Activated B cell treated with CpG ODN at 0.5 μM for 24 hours (primary cell): ENCODE measurements at regions of chr4 and their contacts with region 1.

Region 1: GRCh38 chr4:82268050-82268825 is 105.6 kb downstream of the HNRNPD start:
- DNase-seq: no peak
- ATAC-seq: peak; percentile 89
- H3K4me3 Mint-ChIP-seq: no peak overlapping the region
- H3K27ac Mint-ChIP-seq: no peak overlapping the region
- H3K4me1 Mint-ChIP-seq: peaks cover 32% of the 10 kb centered on the region
- H3K27me3 Mint-ChIP-seq: peaks cover 3% of the 10 kb centered on the region
- CTCF ChIP-seq: peak; percentile 62

Region 2: GRCh38 chr4:81606801-81607501 is 661.3 kb before region 1 on chr4:
- CTCF ChIA-PET with region 1: no interaction called
- POLR2A ChIA-PET with region 1: no interaction called
- intact Hi-C with region 1: loop called (anchors 5 kb)
- DNase-seq: no peak
- ATAC-seq: peak; percentile 54
- H3K4me3 Mint-ChIP-seq: peak overlapping the region; percentile 55
- H3K27ac Mint-ChIP-seq: peak overlapping the region; percentile 86
- H3K4me1 Mint-ChIP-seq: peaks cover 58% of the 10 kb centered on the region
- H3K27me3 Mint-ChIP-seq: no peaks in the 10 kb centered on the region
- CTCF ChIP-seq: no peak

Region 3: DNA sequence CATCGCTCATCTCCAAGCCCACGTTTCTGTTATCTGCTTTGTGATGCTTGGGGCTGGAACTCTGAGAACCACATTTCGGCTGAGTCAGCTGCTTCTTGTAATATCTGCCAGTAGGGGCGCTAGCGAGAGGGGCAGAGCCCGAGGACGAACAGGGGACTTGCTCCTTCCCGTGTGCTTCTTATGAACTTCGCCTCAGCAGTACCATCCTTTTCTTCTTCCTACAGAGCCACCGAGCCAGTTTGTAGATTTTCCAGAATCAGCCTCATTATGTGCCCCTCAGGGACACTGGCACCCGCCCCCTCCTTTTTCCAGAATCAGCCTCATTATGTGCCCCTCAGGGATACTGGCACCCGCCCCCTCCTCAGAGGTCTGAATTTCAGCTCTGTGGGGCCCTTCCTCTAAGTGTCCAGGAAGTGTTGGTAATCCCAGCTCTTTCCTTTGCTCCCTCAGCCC is 354.8 kb before region 1 on chr4:
- CTCF ChIA-PET with region 1: interaction called, 4 read pairs
- POLR2A ChIA-PET with region 1: no interaction called
- intact Hi-C with region 1: loop called (anchors 2 kb)
- DNase-seq: peak; percentile 20
- ATAC-seq: peak; percentile 62
- H3K4me3 Mint-ChIP-seq: no peak overlapping the region
- H3K27ac Mint-ChIP-seq: no peak overlapping the region
- H3K4me1 Mint-ChIP-seq: peaks cover 3% of the 10 kb centered on the region
- H3K27me3 Mint-ChIP-seq: peaks cover 11% of the 10 kb centered on the region
- CTCF ChIP-seq: peak; percentile 17

Region 4: DNA sequence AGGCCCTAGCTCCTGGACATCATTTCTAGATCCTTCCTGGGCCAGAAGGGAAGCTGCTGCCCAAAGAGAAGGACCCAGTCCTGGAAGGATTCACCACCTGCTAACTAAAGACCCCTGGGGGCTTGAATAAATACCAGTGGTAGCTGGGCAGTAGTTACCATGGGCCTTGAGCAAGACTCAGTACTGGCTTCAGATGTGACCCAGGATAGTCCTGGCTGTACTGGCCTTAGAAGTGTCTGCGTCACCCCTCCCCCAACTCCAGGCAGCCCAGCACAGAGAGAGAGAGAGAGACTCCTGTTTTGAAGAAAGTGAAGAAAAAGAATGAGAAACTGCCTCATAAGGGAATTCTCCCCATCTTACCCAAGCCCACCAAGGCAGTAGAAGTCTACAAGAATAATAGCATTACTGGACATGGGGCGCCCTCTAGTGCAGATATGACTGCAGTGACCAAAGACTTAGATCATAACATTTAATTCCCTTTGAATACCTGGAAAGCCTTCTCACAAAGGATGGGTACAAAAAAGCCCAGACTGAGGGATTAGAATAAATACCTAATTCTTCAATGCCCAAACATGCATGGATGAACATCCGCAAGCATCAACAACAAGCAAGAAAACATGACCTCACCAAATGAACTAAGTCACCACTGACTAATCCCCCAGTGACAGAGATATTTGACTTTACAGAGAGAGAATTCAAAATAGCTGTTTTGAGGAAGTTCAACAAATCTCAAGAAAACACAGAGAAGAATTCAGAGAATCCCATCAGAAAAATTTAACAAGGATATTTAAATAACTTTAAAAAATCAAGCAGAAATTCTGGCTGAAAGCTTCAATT is 66.2 kb before region 1 on chr4:
- CTCF ChIA-PET with region 1: interaction called, 12 read pairs
- POLR2A ChIA-PET with region 1: no interaction called
- intact Hi-C with region 1: loop called (anchors 1 kb)
- DNase-seq: no peak
- ATAC-seq: peak; percentile 50
- H3K4me3 Mint-ChIP-seq: no peak overlapping the region
- H3K27ac Mint-ChIP-seq: no peak overlapping the region
- H3K4me1 Mint-ChIP-seq: no peaks in the 10 kb centered on the region
- H3K27me3 Mint-ChIP-seq: peaks cover 16% of the 10 kb centered on the region
- CTCF ChIP-seq: no peak

Region 5: DNA sequence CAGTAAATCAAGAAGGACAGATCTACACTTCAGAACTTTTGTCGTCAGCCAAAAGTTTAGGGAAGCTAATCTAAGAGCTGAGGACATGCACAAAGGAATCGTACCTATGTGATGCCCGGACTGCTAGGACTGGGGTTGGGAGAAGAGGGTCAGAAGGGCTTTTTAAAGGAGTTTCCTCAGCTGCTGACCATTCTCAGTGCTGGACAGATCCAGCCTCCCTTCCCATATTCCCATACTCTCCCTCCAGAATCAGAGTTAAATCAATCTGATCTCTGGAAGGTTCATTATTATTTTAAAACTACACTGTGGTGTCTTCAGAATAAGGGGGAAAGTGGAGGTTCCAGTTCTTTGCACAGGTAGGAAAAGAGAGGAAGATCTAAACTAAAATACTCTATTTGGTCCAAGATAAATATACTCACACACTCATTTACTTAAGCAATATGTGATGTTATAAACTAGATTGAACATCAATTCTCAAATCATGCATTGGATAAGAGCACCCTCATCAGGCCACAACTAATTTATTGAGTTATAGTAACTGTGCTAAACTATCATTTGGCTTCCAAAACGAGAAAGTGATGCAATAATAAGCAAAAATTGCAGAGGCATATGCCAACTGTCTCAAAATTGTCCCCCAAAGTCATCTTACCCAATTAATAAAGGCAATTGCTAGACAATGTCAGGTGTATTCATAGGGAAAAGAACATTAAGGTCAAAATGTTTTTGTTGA is 19.2 kb before region 1 on chr4:
- CTCF ChIA-PET with region 1: interaction called, 14 read pairs
- POLR2A ChIA-PET with region 1: interaction called, 3 read pairs
- intact Hi-C with region 1: loop called (anchors 1 kb)
- DNase-seq: no peak
- ATAC-seq: no peak
- H3K4me3 Mint-ChIP-seq: no peak overlapping the region
- H3K27ac Mint-ChIP-seq: no peak overlapping the region
- H3K4me1 Mint-ChIP-seq: no peaks in the 10 kb centered on the region
- H3K27me3 Mint-ChIP-seq: peaks cover 2% of the 10 kb centered on the region
- CTCF ChIP-seq: no peak

Region 6: DNA sequence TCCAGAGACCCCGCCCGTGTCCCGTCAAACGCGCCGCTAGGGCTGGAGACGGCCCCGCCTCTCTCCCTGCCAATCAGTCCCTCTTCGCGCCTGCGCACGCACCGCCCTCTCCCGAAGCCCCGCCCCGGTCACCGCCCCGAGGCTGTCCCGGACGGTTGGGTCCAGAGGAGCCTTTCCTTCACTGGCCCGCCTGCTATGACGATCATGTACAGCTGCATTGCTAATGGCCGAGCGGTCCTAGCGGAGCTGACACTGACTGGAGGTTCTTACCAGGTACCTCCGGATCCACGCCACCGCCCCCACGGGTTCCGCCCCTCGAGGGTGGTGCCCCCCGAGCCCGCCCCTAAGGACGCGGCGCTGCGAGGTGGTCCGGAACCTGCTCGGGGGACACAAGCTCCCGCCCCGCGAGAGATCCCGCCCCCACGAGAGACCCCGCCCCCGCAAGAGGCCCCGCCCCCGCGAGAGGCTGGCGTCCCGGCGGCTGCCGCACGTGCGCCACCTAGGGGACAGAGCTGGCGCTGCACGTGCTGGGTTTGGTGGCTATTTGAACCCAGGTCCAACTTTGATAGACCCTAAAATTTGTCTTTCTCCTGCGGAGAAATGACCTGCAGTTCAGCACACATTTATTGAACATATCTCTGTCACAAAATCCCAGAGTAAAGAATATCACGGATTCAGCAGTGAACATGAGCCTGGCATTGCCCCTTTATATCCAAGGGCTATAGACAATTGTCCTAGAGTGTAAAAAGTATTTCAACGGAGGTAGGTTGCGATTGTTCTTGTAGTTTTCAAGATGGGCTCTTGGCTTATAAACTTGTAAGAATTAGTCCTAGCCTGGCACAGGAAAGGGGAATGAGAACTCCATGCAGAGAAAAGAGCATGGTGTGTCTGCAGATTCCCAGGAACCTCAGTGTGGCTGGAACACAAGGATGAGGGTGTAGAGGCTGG is 16.9 kb after region 1 on chr4:
- CTCF ChIA-PET with region 1: interaction called, 20 read pairs
- POLR2A ChIA-PET with region 1: interaction called, 40 read pairs
- intact Hi-C with region 1: loop called (anchors 1 kb)
- DNase-seq: peak; percentile 100
- ATAC-seq: peak; percentile 92
- H3K4me3 Mint-ChIP-seq: peak overlapping the region; percentile 83
- H3K27ac Mint-ChIP-seq: peak overlapping the region; percentile 77
- H3K4me1 Mint-ChIP-seq: peaks cover 21% of the 10 kb centered on the region
- H3K27me3 Mint-ChIP-seq: no peaks in the 10 kb centered on the region
- CTCF ChIP-seq: peak; percentile 97

Region 7: DNA sequence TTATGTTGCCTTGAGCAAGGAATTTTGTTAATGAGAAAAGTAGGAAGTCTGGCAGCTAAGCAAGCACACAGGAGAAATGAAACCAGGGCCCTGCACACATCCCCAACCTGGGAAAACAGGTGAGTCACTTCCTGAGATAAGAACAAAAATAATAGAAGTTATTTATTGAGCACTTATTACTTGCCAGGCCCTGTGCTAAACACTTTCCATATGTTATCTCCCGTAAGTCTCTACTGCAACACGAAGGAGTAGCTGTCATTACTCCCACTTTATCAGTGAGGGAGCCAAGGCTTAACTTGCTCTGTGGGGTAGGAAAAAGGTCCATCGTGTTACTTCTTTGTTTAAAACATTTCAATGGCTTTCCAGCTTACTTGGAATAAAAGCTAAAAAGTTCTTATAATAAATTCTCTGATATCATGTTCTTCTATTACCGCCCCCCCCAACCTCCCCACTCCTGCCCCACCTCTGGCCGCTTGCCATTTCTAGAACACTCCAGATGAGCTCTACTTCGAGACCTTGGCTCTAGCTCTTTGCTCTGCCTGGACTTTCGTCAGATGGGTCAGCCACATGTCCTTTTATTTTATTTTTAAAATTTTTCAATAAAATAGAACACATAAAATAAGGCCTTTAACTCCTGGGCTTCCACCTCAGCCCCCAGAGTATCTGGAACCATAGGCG is 882.6 kb after region 1 on chr4:
- CTCF ChIA-PET with region 1: no interaction called
- POLR2A ChIA-PET with region 1: no interaction called
- intact Hi-C with region 1: no loop called
- DNase-seq: no peak
- ATAC-seq: no peak
- H3K4me3 Mint-ChIP-seq: no peak overlapping the region
- H3K27ac Mint-ChIP-seq: no peak overlapping the region
- H3K4me1 Mint-ChIP-seq: peaks cover 45% of the 10 kb centered on the region
- H3K27me3 Mint-ChIP-seq: no peaks in the 10 kb centered on the region
- CTCF ChIP-seq: no peak